Prostate gland (tissue), 2 donors: ENCODE measurements at regions of chr18 and their contacts with region 1.

Region 1: GRCh38 chr18:36296650-36297416 is 680 bp upstream of the FHOD3 start:
- DNase-seq: peak; percentile 30
- H3K4me3 ChIP-seq: peak overlapping the region; percentile 54 to 63
- H3K27ac ChIP-seq: peak overlapping the region; percentile 54 to 68
- H3K4me1 ChIP-seq: peaks cover 6% of the 10 kb centered on the region
- H3K27me3 ChIP-seq: no peaks in the 10 kb centered on the region
- CTCF ChIP-seq: peak in 2 of 4 experiments; percentile 4 to 21
- POLR2A ChIP-seq: no peak

Region 2: DNA sequence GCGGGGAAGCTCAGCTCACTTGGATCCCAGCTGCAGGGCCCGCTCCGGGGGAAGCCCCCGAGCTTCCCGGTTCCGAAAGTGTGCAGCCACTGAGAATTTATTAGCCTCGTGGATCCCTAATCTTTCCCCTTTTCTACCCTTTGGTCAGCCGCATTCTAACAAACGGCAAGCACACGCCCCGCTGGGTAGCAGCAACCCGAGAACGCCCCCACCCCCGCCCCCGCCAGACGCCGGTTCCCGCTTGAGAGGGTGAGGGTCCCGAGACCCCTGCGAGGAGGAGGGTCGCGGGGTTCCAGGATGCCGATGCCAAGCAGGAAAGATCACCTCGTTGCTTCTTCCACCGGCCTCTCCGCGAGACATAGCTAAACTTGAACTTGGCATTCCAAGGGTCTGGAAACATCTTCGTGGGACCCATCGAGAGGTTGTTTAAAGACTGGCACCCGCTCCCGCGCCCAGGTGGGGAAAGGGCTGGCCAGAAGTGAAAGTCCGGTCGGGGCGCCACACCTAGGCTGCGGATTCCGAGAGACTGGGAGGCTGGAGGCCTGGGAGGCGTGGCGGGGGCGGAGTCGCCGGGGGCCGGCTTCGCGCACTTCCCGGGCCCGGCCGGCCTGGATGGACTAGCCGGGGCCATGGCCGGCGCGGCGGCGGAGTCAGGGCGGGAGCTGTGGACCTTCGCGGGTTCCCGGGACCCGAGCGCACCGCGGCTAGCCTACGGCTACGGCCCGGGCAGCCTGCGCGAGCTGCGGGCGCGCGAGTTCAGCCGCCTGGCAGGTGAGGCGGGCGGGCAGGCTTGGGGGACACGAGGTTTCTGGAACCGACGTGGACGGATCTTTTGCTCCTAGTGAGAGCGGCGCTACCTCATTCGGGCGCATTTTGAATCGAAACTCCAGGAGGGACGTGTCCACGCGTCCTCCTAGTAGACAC is 109.7 kb before region 1 on chr18 and contains the start of gene MOCOS:
- intact Hi-C with region 1: no loop called
- DNase-seq: peak; percentile 72
- H3K4me3 ChIP-seq: peak within 1 kb of the TSS; percentile 64
- H3K27ac ChIP-seq: peak within 1 kb of the TSS; percentile 59 to 60
- H3K4me1 ChIP-seq: no peaks in the 10 kb centered on the region
- H3K27me3 ChIP-seq: no peaks in the 10 kb centered on the region
- CTCF ChIP-seq: no peak
- POLR2A ChIP-seq: peak; percentile 69
- total RNA-seq, gene MOCOS: 2.5 to 3.9 TPM

Region 3: GRCh38 chr18:36419905-36420531 is 123.2 kb after region 1 on chr18:
- intact Hi-C with region 1: loop called (anchors 10 kb)
- DNase-seq: no peak
- H3K4me3 ChIP-seq: no peak overlapping the region
- H3K27ac ChIP-seq: no peak overlapping the region
- H3K4me1 ChIP-seq: no peaks in the 10 kb centered on the region
- H3K27me3 ChIP-seq: no peaks in the 10 kb centered on the region
- CTCF ChIP-seq: no peak
- POLR2A ChIP-seq: no peak

Region 4: GRCh38 chr18:36572135-36572856 is 275.5 kb after region 1 on chr18:
- intact Hi-C with region 1: loop called (anchors 2 kb)
- DNase-seq: peak; percentile 40
- H3K4me3 ChIP-seq: no peak overlapping the region
- H3K27ac ChIP-seq: no peak overlapping the region
- H3K4me1 ChIP-seq: no peaks in the 10 kb centered on the region
- H3K27me3 ChIP-seq: no peaks in the 10 kb centered on the region
- CTCF ChIP-seq: peak in 3 of 4 experiments; percentile 46 to 56 (median 52)
- POLR2A ChIP-seq: no peak

Region 5: GRCh38 chr18:36688020-36688965 is 391.5 kb after region 1 on chr18:
- intact Hi-C with region 1: loop called (anchors 5 kb)
- DNase-seq: peak; percentile 81
- H3K4me3 ChIP-seq: no peak overlapping the region
- H3K27ac ChIP-seq: no peak overlapping the region
- H3K4me1 ChIP-seq: no peaks in the 10 kb centered on the region
- H3K27me3 ChIP-seq: no peaks in the 10 kb centered on the region
- CTCF ChIP-seq: peak; percentile 59 to 93 (median 85)
- POLR2A ChIP-seq: no peak

Region 6: DNA sequence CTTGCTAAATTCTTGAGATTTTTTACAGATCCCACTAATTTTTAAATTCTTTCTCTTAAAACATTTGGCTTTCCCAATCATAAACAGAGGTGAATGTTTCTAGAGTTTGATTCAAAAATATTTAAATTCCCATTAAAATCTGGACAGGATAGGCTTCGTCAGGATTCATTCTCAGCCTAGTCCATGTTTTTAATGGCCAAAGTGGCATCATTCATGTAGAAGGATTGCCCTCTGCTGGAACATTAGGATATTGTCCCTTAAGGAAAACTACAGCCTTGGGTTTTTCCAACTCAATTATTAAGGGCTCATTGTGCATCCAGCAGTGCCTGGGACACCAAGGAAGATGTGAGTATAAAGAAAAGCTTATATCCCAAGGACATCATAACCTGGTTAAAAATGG is 460.2 kb after region 1 on chr18:
- intact Hi-C with region 1: loop called (anchors 10 kb)
- DNase-seq: peak; percentile 28
- H3K4me3 ChIP-seq: no peak overlapping the region
- H3K27ac ChIP-seq: peak overlapping the region in 1 of 2 donors; percentile 50
- H3K4me1 ChIP-seq: peaks cover 6% of the 10 kb centered on the region
- H3K27me3 ChIP-seq: no peaks in the 10 kb centered on the region
- CTCF ChIP-seq: peak; percentile 25 to 80 (median 72)
- POLR2A ChIP-seq: no peak

Region 7: GRCh38 chr18:36809590-36810381 is 513.0 kb after region 1 on chr18:
- intact Hi-C with region 1: loop called (anchors 10 kb)
- DNase-seq: peak; percentile 35
- H3K4me3 ChIP-seq: no peak overlapping the region
- H3K27ac ChIP-seq: no peak overlapping the region
- H3K4me1 ChIP-seq: no peaks in the 10 kb centered on the region
- H3K27me3 ChIP-seq: no peaks in the 10 kb centered on the region
- CTCF ChIP-seq: peak; percentile 59 to 65 (median 60)
- POLR2A ChIP-seq: no peak